ENCODE measurements at regions of chr19 and their contacts with region 1.

Region 1: DNA sequence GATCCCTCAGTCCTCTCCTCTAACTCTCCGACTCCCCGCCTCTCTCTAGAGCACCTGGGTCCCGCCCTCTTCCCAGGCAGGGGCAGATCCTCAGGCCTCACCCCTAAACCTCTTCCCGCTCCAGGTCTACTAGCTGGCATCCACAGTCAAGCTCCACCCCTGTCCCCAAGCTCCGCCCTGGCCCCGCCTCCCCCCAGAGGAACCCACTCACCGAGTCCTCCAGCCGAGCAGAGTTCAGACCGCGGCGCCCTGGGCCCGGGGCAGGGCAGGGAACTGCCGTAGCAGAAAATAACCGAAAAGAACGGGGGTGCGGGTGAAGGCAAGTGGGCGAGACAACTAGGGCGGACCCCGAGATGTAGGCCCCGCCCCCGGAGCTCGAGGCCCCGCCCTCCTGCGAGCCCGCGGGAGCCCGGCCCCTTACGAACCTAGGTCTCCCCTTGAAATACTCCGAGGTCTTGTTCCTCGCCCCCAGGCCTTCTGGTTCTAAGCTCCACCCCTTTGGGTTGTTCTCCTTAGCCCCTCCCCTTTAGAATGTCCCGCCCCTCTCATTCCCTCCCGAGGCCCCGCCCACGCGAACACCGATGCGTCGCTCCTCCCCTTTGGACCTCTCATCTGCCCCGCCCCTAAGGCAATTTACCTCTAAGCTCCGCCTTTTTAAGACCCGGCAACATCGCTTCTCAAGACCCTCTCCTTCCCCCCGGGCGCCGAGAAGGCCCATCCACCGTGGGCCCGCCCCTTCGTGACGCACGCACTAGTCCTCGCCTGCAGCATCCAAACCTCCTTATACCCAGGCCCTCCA is at the start of gene GGN:
- DNase-seq: peak; percentile 98
- H3K4me3 ChIP-seq: peak within 1 kb of the TSS; percentile 80
- H3K27ac ChIP-seq: peak within 1 kb of the TSS; percentile 77
- H3K4me1 ChIP-seq: peaks cover 6% of the 10 kb centered on the region
- H3K27me3 ChIP-seq: no peaks in the 10 kb centered on the region
- CTCF ChIP-seq: no peak
- total RNA-seq, gene GGN: 0.83 and 1.3 TPM in 2 replicates

Region 2: GRCh38 chr19:38402967-38403861 is 15.5 kb after region 1 on chr19 and contains the start of gene FAM98C:
- CTCF ChIA-PET with region 1: interaction called, 14 read pairs
- POLR2A ChIA-PET with region 1: interaction called, 20 read pairs
- intact Hi-C with region 1: no loop called
- DNase-seq: peak; percentile 98
- H3K4me3 ChIP-seq: peak within 1 kb of the TSS; percentile 87
- H3K27ac ChIP-seq: peak within 1 kb of the TSS; percentile 70
- H3K4me1 ChIP-seq: no peaks in the 10 kb centered on the region
- H3K27me3 ChIP-seq: no peaks in the 10 kb centered on the region
- CTCF ChIP-seq: peak; percentile 93
- total RNA-seq, gene FAM98C: 11.8 and 12.1 TPM in 2 replicates

Region 3: DNA sequence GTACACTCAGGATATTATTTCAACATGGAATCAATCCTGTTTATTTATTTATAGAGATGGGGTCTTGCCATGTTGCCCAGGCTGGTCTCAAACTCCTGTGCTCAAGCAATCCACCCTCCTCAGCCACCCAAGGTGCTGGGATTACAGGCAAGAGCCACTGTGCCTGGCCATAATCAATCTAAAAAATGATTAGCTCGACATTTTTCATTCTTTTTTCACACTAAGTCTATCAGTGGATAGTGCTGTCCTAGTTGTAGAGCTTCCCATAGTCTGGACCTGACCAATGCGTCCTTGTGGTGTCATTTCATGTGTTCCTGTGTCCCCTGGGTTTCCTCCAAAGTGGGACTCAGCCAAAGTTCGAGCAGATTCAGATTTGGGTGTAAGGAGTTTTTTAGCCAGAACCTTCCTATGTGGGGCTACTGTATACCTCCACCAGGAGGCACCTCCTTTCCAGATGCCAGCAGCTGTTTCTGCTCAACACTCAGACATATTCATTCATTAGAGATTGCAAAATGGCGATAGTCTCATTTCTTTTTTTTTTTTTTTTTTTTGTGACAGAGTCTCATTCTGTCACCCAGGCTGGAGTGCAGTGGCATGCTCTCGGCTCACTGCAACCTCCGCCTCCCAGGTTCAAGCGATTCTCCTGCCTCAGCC is 168.9 kb after region 1 on chr19:
- CTCF ChIA-PET with region 1: no interaction called
- POLR2A ChIA-PET with region 1: no interaction called
- intact Hi-C with region 1: no loop called
- DNase-seq: peak; percentile 32
- H3K4me3 ChIP-seq: no peak overlapping the region
- H3K27ac ChIP-seq: no peak overlapping the region
- H3K4me1 ChIP-seq: no peaks in the 10 kb centered on the region
- H3K27me3 ChIP-seq: no peaks in the 10 kb centered on the region
- CTCF ChIP-seq: peak; percentile 32; the same call in 1 of the 2 replicates